Stomach (tissue), 19 donors: ENCODE measurements at regions of chr1 and their contacts with region 1.

Region 1: GRCh38 chr1:9593492-9594465 is 5.1 kb downstream of the TMEM201 start:
- DNase-seq: peak; percentile 49 to 95
- H3K4me3 ChIP-seq: peak overlapping the region in 1 of 4 donors; percentile 3
- H3K27ac ChIP-seq: peak overlapping the region in 4 of 5 donors; percentile 10 to 65 (median 34)
- H3K4me1 ChIP-seq: peaks cover 22 to 53% (median 44%) of the 10 kb centered on the region in 4 donors
- H3K27me3 ChIP-seq: no peaks in the 10 kb centered on the region
- CTCF ChIP-seq: no peak
- EP300 ChIP-seq: no peak
- POLR2A ChIP-seq: no peak

Region 2: GRCh38 chr1:9269078-9269501 is 324.7 kb before region 1 on chr1:
- intact Hi-C with region 1: loop called (anchors 10 kb)
- DNase-seq: no peak
- H3K4me3 ChIP-seq: no peak overlapping the region
- H3K27ac ChIP-seq: no peak overlapping the region
- H3K4me1 ChIP-seq: peaks cover 8 to 17% (median 13%) of the 10 kb centered on the region in 4 donors
- H3K27me3 ChIP-seq: no peaks in the 10 kb centered on the region
- CTCF ChIP-seq: no peak
- EP300 ChIP-seq: no peak
- POLR2A ChIP-seq: no peak

Region 3: GRCh38 chr1:9960706-9961562 is 367.2 kb after region 1 on chr1:
- intact Hi-C with region 1: no loop called
- DNase-seq: peak in 1 of 2 donors; percentile 26
- H3K4me3 ChIP-seq: no peak overlapping the region
- H3K27ac ChIP-seq: no peak overlapping the region
- H3K4me1 ChIP-seq: no peaks in the 10 kb centered on the region
- H3K27me3 ChIP-seq: no peaks in the 10 kb centered on the region
- CTCF ChIP-seq: no peak
- EP300 ChIP-seq: no peak
- POLR2A ChIP-seq: no peak